ENCODE measurements at regions of chr20 and their contacts with region 1.

Region 1: DNA sequence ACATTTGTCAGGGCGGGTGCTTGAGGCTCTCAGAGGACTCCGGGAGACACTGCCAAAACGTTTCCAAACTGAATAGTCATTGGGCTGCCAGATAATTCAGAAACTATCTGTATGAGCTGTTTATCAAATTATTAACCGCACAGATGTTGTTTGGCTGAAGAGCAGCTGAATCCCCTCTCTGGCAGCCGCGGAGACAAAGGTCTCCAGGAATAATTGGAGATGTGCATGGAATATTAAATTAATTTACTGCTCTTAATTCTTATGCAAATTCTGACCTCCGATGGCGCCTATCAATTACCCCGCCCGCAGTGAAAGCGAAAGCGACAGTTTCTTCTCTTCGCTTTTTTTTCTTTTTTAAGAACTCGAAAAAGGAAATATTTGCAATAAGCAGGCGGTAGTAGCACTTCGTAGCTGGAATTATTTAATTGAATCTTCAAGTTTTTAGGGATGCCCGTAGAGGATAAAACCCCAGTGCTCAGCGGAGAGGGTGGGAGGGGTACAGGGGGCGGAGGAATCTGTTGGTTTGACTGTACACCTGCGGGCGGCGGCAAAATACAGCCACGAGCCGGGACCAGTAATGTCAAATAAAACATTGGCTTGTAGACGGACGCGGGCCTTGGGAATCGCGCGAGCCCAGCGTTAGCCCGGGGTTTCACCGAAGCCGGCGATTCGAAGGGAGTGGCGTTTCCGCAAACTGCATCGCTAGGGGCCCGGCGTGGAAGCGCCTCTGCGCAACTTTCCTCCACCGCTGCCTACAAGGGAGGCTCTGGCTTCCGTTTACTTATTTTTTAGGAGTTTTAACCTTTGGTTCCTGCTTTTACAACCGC is 6.2 kb downstream of the LINC00237 start:
- DNase-seq: peak; percentile 42
- ATAC-seq: peak; percentile 57
- H3K4me3 Mint-ChIP-seq: peak overlapping the region; percentile 88
- H3K27ac Mint-ChIP-seq: peak overlapping the region; percentile 83
- H3K4me1 Mint-ChIP-seq: peaks cover 36% of the 10 kb centered on the region
- H3K27me3 Mint-ChIP-seq: peaks cover 72% of the 10 kb centered on the region
- CTCF ChIP-seq: no peak

Region 2: GRCh38 chr20:21110811-21111210 is 10.8 kb after region 1 on chr20:
- CTCF ChIA-PET with region 1: no interaction called
- POLR2A ChIA-PET with region 1: interaction called, 10 read pairs
- intact Hi-C with region 1: no loop called
- DNase-seq: no peak
- ATAC-seq: no peak
- H3K4me3 Mint-ChIP-seq: no peak overlapping the region
- H3K27ac Mint-ChIP-seq: no peak overlapping the region
- H3K4me1 Mint-ChIP-seq: peaks cover 5% of the 10 kb centered on the region
- H3K27me3 Mint-ChIP-seq: peaks cover 50% of the 10 kb centered on the region
- CTCF ChIP-seq: no peak

Region 3: DNA sequence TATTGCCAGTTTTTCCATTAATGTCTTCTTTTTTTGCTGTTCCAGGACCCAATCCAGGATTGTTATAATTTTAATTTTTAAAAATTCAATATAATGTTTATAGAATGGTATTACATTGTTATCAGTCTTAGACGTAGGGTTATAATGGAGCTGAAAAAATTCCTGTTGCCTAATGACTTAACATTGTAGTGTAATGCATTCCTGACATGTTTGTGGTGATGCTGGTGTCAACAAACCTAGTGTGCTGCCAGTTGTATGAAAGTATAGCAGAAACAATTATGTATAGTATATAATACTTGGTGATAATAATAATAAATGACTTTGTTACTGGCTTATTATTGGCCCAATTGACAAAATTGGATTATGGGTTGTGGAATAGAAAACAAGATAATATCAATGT is 56.3 kb after region 1 on chr20:
- CTCF ChIA-PET with region 1: no interaction called
- POLR2A ChIA-PET with region 1: no interaction called
- intact Hi-C with region 1: no loop called
- DNase-seq: no peak
- ATAC-seq: no peak
- H3K4me3 Mint-ChIP-seq: no peak overlapping the region
- H3K27ac Mint-ChIP-seq: no peak overlapping the region
- H3K4me1 Mint-ChIP-seq: peaks cover 3% of the 10 kb centered on the region
- H3K27me3 Mint-ChIP-seq: no peaks in the 10 kb centered on the region
- CTCF ChIP-seq: no peak

Region 4: DNA sequence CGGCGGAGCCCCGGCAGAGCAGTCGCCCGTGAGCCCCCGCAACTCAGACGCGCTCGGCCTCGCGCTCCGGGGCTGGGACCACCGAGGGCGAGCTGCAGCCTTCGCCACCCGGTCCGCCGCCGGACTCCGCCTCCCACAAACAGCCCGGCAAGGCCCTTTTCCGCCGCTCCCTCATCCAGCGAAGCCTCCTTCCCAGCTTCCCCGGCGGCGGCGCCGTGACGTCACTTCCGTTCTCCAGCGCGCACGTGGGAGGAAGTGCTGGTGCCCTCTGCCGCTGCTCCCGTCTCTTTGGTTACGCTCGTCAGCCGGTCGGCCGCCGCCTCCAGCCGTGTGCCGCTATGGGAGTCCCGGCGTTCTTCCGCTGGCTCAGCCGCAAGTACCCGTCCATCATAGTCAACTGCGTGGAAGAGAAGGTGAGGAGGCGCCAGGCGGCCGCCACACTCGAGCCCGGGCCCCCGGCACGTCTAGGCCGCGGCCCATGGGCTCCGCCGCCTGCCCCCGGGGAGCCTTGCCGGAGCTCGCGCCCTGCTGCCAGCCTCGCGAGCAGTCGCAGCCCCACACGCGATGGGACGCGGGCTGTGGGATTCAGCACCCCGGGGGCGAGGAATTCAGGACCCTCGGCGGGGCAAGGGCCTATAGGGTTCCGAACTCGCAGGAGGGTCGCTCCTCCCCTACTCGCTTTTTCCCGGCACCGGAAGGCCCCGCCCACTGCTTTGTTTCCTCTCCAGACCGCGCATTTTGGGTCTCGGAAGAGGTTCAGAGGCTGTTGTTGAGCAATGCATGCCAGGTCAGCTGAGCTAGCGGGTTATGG is 203.3 kb after region 1 on chr20 and contains the start of gene XRN2:
- CTCF ChIA-PET with region 1: no interaction called
- POLR2A ChIA-PET with region 1: no interaction called
- intact Hi-C with region 1: loop called (anchors 5 kb)
- DNase-seq: peak; percentile 93
- ATAC-seq: peak; percentile 85
- H3K4me3 Mint-ChIP-seq: peak within 1 kb of the TSS; percentile 98
- H3K27ac Mint-ChIP-seq: peak within 1 kb of the TSS; percentile 98
- H3K4me1 Mint-ChIP-seq: peaks cover 30% of the 10 kb centered on the region
- H3K27me3 Mint-ChIP-seq: no peaks in the 10 kb centered on the region
- CTCF ChIP-seq: no peak
- total RNA-seq, gene XRN2: 60.7 and 61.0 TPM in 2 replicates

Region 5: DNA sequence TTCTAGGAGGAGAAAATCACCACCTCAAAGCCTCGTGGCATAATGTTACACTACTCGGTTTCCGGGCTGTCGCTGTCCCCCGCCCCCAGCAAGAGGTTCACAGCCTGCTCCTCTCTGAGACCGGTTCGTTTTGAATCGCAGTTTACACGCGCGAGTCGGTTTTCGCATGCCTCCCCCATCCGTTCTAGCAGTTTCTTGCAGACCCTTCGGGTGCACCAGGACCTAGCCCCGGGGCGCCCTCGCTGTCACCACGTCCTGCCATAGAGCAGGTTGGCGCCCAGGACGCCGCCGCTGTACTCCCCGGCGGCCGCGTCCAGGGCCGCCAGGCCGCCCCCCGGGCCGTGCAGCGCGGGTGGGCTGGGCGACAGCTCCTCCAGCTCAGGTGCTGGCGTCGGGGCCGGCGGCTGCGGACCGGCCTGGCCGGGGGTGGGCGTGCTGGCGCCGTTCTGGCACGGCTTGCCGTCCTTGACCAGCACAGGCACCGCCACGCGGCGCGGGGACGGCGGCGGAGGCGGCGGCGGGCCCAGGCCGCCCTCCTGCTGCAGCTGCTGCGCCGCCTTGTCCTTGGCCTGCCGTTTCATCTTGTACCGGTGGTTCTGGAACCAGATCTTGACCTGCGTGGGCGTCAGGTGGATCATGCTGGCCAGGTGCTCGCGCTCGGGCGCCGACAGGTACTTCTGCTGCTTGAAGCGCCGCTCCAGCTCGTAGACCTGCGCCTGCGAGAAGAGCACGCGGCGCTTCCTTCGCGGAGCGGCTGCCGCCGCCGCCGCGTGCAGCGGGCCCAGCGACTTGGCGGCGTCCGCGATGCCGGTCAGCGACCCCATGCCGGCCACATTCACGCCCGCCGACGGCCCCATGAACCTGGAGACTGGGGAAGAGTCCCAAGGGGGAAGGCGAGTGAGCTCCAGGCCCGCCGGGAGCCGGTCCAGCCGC is 296.0 kb after region 1 on chr20:
- CTCF ChIA-PET with region 1: no interaction called
- POLR2A ChIA-PET with region 1: no interaction called
- intact Hi-C with region 1: loop called (anchors 2 kb)
- DNase-seq: peak; percentile 31
- ATAC-seq: peak; percentile 7
- H3K4me3 Mint-ChIP-seq: peak overlapping the region; percentile 61
- H3K27ac Mint-ChIP-seq: no peak overlapping the region
- H3K4me1 Mint-ChIP-seq: peaks cover 16% of the 10 kb centered on the region
- H3K27me3 Mint-ChIP-seq: peaks cover 63% of the 10 kb centered on the region
- CTCF ChIP-seq: no peak